Dorsolateral prefrontal cortex (tissue), 120 donors: ENCODE measurements at regions of chr4 and their contacts with region 1.

Region 1: GRCh38 chr4:21790438-21791029 is 158.0 kb downstream of the KCNIP4 start:
- DNase-seq: no peak
- H3K4me3 ChIP-seq: no peak overlapping the region
- H3K27ac ChIP-seq: peak overlapping the region in 8 of 59 donors; percentile 10 to 67 (median 24)
- H3K27me3 ChIP-seq: no peaks in the 10 kb centered on the region
- CTCF ChIP-seq: peak; percentile 58 to 91 (median 74)

Region 2: DNA sequence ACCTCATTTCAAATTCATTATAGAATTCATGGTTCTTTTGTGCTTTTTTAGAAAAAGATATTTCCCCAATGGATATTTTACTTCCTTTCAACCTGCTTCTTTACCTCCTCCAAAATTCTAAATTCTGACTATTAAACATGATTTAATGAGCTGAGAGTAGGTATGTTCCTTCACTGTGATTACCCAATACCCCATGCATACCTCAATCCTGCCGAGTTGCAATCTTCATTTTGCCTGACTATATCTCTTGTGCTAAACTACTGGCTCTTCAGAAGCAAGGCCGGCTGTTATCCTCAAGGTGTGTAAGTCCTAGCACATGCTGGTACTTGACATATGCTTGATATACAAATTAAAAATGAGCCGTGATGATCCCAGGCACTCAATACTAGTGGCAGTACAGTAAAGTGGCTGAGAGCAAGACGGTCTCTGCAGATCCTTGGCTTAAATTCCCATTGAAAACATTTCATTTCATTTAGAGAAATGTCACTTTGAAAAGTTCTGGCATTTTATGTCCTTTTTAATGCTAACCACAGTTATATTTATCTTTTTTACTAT is 162.3 kb before region 1 on chr4:
- intact Hi-C with region 1: no loop called
- DNase-seq: no peak
- H3K4me3 ChIP-seq: no peak overlapping the region
- H3K27ac ChIP-seq: no peak overlapping the region
- H3K27me3 ChIP-seq: no peaks in the 10 kb centered on the region
- CTCF ChIP-seq: no peak

Region 3: GRCh38 chr4:21948347-21949072 is 158.0 kb after region 1 on chr4 and contains the start of gene KCNIP4:
- intact Hi-C with region 1: loop called in 1 of 2 experiments (anchors 5 kb)
- DNase-seq: peak in 9 of 10 donors; percentile 12 to 66 (median 37)
- H3K4me3 ChIP-seq: peak within 1 kb of the TSS; percentile 28 to 75 (median 59)
- H3K27ac ChIP-seq: peak within 1 kb of the TSS in 55 of 59 donors; percentile 7 to 86 (median 71)
- H3K27me3 ChIP-seq: peaks cover 0 to 32% (median 3%) of the 10 kb centered on the region in 45 donors
- CTCF ChIP-seq: no peak
- total RNA-seq, gene KCNIP4: 30.0 to 178 (median 110) TPM

Region 4: DNA sequence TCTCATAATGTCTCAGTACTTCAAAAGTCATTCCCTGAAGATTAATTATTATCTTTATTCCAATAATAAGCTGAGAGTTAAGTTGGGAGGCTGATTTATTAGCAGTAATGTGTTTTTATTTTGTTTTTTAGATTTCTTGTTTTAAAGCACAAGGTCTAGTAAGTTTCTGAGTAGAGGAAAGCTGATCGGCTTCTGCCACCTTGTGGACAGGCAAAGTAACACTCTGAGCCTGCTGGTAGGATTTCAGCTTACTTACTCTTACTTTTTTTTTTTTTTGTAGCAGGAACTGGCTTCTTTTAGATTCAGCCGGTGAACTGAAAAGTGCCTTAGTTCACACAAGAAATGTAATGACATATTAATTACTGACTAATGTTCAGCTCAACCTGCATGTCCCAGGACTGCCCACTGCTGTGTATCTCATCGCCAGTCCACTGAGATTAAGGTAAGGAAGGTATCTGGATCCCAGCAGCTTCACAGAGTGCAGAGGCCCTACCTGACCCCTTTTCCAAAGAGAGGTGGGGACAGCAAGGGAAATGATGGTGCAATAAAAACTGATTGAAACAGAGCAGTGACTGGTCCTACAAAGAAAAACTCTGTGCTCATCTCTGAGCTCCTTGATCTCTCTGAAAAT is 598.8 kb after region 1 on chr4:
- intact Hi-C with region 1: loop called (anchors 2 kb)
- DNase-seq: peak in 8 of 10 donors; percentile 29 to 71 (median 58)
- H3K4me3 ChIP-seq: no peak overlapping the region
- H3K27ac ChIP-seq: no peak overlapping the region
- H3K27me3 ChIP-seq: no peaks in the 10 kb centered on the region
- CTCF ChIP-seq: peak; percentile 70 to 97 (median 86)

Region 5: GRCh38 chr4:22688236-22688635 is 897.7 kb after region 1 on chr4:
- intact Hi-C with region 1: loop called (anchors 5 kb)
- DNase-seq: no peak
- H3K4me3 ChIP-seq: no peak overlapping the region
- H3K27ac ChIP-seq: no peak overlapping the region
- H3K27me3 ChIP-seq: peaks cover 0 to 24% (median 0%) of the 10 kb centered on the region in 45 donors
- CTCF ChIP-seq: no peak